Activated CD4-positive, alpha-beta T cell treated with anti-CD3 and anti-CD28 coated beads for 36 hours (primary cell): ENCODE measurements at regions of chr2 and their contacts with region 1.

Region 1: GRCh38 chr2:202588647-202589581 is 45.9 kb upstream of the FAM117B start:
- DNase-seq: peak; percentile 80
- ATAC-seq: peak; percentile 97
- H3K4me3 Mint-ChIP-seq: no peak overlapping the region
- H3K27ac Mint-ChIP-seq: peak overlapping the region; percentile 56
- H3K4me1 Mint-ChIP-seq: peaks cover 11% of the 10 kb centered on the region
- H3K27me3 Mint-ChIP-seq: no peaks in the 10 kb centered on the region

Region 2: GRCh38 chr2:202577250-202578183 is 11.4 kb before region 1 on chr2:
- CTCF ChIA-PET with region 1: interaction called, 16 read pairs
- POLR2A ChIA-PET with region 1: no interaction called
- intact Hi-C with region 1: no loop called
- DNase-seq: no peak
- ATAC-seq: no peak
- H3K4me3 Mint-ChIP-seq: no peak overlapping the region
- H3K27ac Mint-ChIP-seq: no peak overlapping the region
- H3K4me1 Mint-ChIP-seq: peaks cover 1% of the 10 kb centered on the region
- H3K27me3 Mint-ChIP-seq: no peaks in the 10 kb centered on the region

Region 3: GRCh38 chr2:202602285-202602684 is 13.4 kb after region 1 on chr2:
- CTCF ChIA-PET with region 1: interaction called, 14 read pairs
- POLR2A ChIA-PET with region 1: interaction called, 3 read pairs
- intact Hi-C with region 1: no loop called
- DNase-seq: no peak
- ATAC-seq: no peak
- H3K4me3 Mint-ChIP-seq: no peak overlapping the region
- H3K27ac Mint-ChIP-seq: no peak overlapping the region
- H3K4me1 Mint-ChIP-seq: peaks cover 7% of the 10 kb centered on the region
- H3K27me3 Mint-ChIP-seq: no peaks in the 10 kb centered on the region

Region 4: DNA sequence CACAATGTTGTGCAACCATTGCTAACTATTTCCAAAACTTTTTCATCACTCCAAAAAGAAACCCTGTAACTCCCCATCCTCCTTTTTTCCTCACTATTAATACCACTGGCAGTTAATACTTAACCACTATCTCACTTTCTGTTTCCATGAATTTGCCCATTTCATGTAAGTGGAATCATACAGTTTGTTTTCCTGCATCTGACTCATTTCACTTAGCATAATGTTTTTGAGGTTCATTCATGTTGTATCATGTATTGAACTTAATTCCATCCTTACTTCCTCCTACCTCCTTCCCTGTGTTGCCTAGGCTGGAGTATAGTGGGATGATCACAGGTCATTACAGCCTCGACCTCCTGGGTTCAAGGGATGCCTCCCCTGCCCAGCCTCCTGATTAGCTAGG is 114.2 kb after region 1 on chr2:
- CTCF ChIA-PET with region 1: interaction called, 10 read pairs
- POLR2A ChIA-PET with region 1: no interaction called
- intact Hi-C with region 1: loop called (anchors 1 to 10 kb)
- DNase-seq: no peak
- ATAC-seq: peak; percentile 15
- H3K4me3 Mint-ChIP-seq: peak overlapping the region; percentile 9
- H3K27ac Mint-ChIP-seq: peak overlapping the region; percentile 91
- H3K4me1 Mint-ChIP-seq: peaks cover 68% of the 10 kb centered on the region
- H3K27me3 Mint-ChIP-seq: no peaks in the 10 kb centered on the region

Region 5: DNA sequence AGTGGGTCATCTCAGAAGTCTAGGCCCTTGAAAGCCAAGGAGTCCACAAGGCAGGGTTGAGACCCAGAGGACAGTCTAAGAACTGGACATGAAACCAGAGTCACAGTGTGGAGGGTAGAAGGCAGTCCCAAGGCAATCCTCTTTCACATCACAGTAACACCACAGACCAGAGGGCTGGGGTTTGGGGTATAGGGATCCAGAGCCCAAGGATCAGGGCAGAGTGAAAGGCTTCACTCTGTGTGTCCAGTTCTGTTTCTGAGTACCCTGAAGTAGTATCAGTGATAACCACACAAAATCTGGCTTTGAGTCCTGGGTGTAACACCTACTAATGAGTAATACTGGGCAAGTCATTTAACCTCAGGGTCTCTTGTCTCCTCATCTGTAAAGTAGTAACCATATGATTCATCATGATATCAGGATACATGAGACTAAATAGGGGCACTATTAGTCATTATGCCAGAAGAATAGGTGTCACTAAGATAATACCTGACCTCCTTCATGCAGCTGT is 191.7 kb after region 1 on chr2:
- CTCF ChIA-PET with region 1: interaction called, 3 read pairs
- POLR2A ChIA-PET with region 1: no interaction called
- intact Hi-C with region 1: loop called in 1 of 2 experiments (anchors 5 kb)
- DNase-seq: no peak
- ATAC-seq: peak; percentile 97
- H3K4me3 Mint-ChIP-seq: no peak overlapping the region
- H3K27ac Mint-ChIP-seq: peak overlapping the region; percentile 55
- H3K4me1 Mint-ChIP-seq: peaks cover 13% of the 10 kb centered on the region
- H3K27me3 Mint-ChIP-seq: no peaks in the 10 kb centered on the region

Region 6: GRCh38 chr2:202831242-202832220 is 242.6 kb after region 1 on chr2:
- CTCF ChIA-PET with region 1: no interaction called
- POLR2A ChIA-PET with region 1: no interaction called
- intact Hi-C with region 1: loop called in 1 of 2 experiments (anchors 2 kb)
- DNase-seq: peak; percentile 73
- ATAC-seq: peak; percentile 97
- H3K4me3 Mint-ChIP-seq: no peak overlapping the region
- H3K27ac Mint-ChIP-seq: no peak overlapping the region
- H3K4me1 Mint-ChIP-seq: peaks cover 10% of the 10 kb centered on the region
- H3K27me3 Mint-ChIP-seq: no peaks in the 10 kb centered on the region

Region 7: DNA sequence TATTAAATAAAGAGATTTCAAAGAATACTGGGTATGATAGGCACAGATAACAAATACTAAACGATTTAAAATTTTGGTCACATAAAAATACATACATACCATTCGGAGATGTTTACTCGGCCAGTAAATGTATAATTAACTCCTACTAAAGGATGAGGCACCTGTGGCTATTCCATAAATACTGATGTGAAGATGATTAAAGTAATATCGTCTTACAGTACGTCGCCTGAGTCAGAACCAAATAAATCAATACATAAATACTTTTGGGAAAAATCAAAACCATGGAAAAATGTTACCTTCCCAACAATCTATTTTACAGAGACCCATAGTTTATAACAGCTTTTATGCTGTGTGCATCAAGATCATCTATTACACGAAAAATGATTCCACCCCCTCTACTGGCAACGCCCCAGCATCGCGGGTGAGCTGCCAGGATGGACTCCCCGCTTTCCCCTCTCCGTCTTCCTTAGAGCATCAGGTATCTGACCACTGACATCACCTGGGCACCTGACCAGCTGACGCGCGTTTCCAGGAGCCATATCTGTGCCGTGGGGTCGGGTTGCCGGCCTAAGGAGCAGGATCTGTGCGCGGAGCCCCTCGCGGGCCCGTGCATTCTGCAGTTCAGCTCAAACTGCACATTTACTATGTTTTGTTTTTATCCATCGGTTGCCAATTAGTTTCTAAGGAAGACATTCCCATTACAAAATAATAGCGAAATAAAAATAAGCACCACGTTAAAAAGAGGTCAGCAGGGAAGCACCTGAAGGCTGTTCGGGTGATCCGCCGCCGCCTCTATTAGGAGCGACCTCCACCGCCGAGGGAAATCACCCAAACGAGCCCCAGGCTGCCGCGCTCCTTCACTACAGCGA is 281.8 kb after region 1 on chr2:
- CTCF ChIA-PET with region 1: interaction called, 20 read pairs
- POLR2A ChIA-PET with region 1: interaction called, 3 read pairs
- intact Hi-C with region 1: loop called (anchors 1 to 5 kb)
- DNase-seq: peak; percentile 83
- ATAC-seq: peak; percentile 78
- H3K4me3 Mint-ChIP-seq: peak overlapping the region; percentile 90
- H3K27ac Mint-ChIP-seq: peak overlapping the region; percentile 80
- H3K4me1 Mint-ChIP-seq: peaks cover 11% of the 10 kb centered on the region
- H3K27me3 Mint-ChIP-seq: no peaks in the 10 kb centered on the region